B cell (primary cell): ENCODE measurements at regions of chr5 and their contacts with region 1.

Region 1: GRCh38 chr5:172819547-172819946 is 14.5 kb upstream of the ERGIC1 start:
- DNase-seq: no peak
- ATAC-seq: no peak
- H3K4me3 ChIP-seq: no peak overlapping the region
- H3K4me3 Mint-ChIP-seq: no peak overlapping the region
- H3K27ac ChIP-seq: no peak overlapping the region
- H3K27ac Mint-ChIP-seq: no peak overlapping the region
- H3K4me1 ChIP-seq: no peaks in the 10 kb centered on the region
- H3K4me1 Mint-ChIP-seq: peaks cover 5% of the 10 kb centered on the region
- H3K27me3 ChIP-seq: no peaks in the 10 kb centered on the region
- H3K27me3 Mint-ChIP-seq: no peaks in the 10 kb centered on the region
- CTCF ChIP-seq: no peak

Region 2: GRCh38 chr5:172795318-172795977 is 24.1 kb before region 1 on chr5:
- CTCF ChIA-PET with region 1: no interaction called
- POLR2A ChIA-PET with region 1: interaction called, 10 read pairs
- intact Hi-C with region 1: no loop called
- DNase-seq: no peak
- ATAC-seq: no peak
- H3K4me3 ChIP-seq: no peak overlapping the region
- H3K4me3 Mint-ChIP-seq: no peak overlapping the region
- H3K27ac ChIP-seq: no peak overlapping the region
- H3K27ac Mint-ChIP-seq: no peak overlapping the region
- H3K4me1 ChIP-seq: peaks cover 0 to 10% of the 10 kb centered on the region in 2 donors
- H3K4me1 Mint-ChIP-seq: peaks cover 7% of the 10 kb centered on the region
- H3K27me3 ChIP-seq: no peaks in the 10 kb centered on the region
- H3K27me3 Mint-ChIP-seq: no peaks in the 10 kb centered on the region
- CTCF ChIP-seq: no peak

Region 3: GRCh38 chr5:172958331-172959046 is 138.9 kb after region 1 on chr5:
- CTCF ChIA-PET with region 1: no interaction called
- POLR2A ChIA-PET with region 1: no interaction called
- intact Hi-C with region 1: no loop called
- DNase-seq: peak; percentile 82
- ATAC-seq: peak; percentile 73
- H3K4me3 ChIP-seq: peak overlapping the region; percentile 44 to 97 (median 85)
- H3K4me3 Mint-ChIP-seq: peak overlapping the region; percentile 97
- H3K27ac ChIP-seq: peak overlapping the region; percentile 54 to 81
- H3K27ac Mint-ChIP-seq: peak overlapping the region; percentile 96
- H3K4me1 ChIP-seq: peaks cover 8 to 18% of the 10 kb centered on the region in 2 donors
- H3K4me1 Mint-ChIP-seq: peaks cover 23% of the 10 kb centered on the region
- H3K27me3 ChIP-seq: no peaks in the 10 kb centered on the region
- H3K27me3 Mint-ChIP-seq: no peaks in the 10 kb centered on the region
- CTCF ChIP-seq: no peak